Common myeloid progenitor, CD34-positive (primary cell): ENCODE measurements at regions of chr9 and their contacts with region 1.

Region 1: DNA sequence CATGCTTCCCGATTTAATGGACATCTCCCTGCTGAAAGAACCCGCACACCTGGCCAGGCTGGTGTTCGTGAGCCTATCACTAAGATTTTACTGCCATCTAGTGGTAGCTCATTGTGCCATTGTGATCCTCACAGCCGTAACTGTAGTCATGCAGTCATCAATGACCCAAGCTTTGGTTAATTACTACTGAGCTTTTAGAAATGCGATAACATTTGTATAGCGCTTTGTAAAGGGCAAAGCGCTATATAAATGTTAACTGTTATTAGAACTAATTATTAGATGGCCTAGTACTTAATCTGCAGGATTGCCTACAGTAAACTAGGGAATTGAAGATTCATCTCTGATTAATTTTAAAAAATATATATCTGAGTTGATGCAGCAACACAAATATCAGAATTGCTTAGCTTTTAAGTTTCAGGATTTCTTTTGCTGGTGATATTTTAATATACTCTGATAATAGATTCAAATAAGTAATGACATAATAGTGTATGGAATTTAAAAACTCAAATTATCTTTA is 90.2 kb downstream of the HACD4 start:
- DNase-seq: peak; percentile 72 to 84 (median 82)
- H3K4me3 ChIP-seq: peak overlapping the region in 2 of 7 experiments; percentile 11 to 62
- H3K27ac ChIP-seq: no peak overlapping the region
- H3K4me1 ChIP-seq: peaks cover 0 to 4% (median 0%) of the 10 kb centered on the region in 4 experiments
- H3K27me3 ChIP-seq: no peaks in the 10 kb centered on the region

Region 2: GRCh38 chr9:20622330-20623020 is 318.8 kb before region 1 on chr9 and contains the start of gene MLLT3:
- CTCF ChIA-PET with region 1: interaction called, 36 read pairs
- POLR2A ChIA-PET with region 1: interaction called, 4 read pairs
- DNase-seq: peak; percentile 96 to 97 (median 97)
- H3K4me3 ChIP-seq: peak within 1 kb of the TSS; percentile 84 to 99 (median 97)
- H3K27ac ChIP-seq: peak within 1 kb of the TSS in 1 of 2 experiments; percentile 73
- H3K4me1 ChIP-seq: peaks cover 11 to 41% (median 33%) of the 10 kb centered on the region in 4 experiments
- H3K27me3 ChIP-seq: no peaks in the 10 kb centered on the region

Region 3: GRCh38 chr9:20884985-20885593 is 56.1 kb before region 1 on chr9:
- CTCF ChIA-PET with region 1: interaction called, 19 read pairs
- POLR2A ChIA-PET with region 1: no interaction called
- DNase-seq: peak; percentile 69 to 88 (median 86)
- H3K4me3 ChIP-seq: no peak overlapping the region
- H3K27ac ChIP-seq: no peak overlapping the region
- H3K4me1 ChIP-seq: peaks cover 0 to 6% (median 2%) of the 10 kb centered on the region in 4 experiments
- H3K27me3 ChIP-seq: no peaks in the 10 kb centered on the region

Region 4: DNA sequence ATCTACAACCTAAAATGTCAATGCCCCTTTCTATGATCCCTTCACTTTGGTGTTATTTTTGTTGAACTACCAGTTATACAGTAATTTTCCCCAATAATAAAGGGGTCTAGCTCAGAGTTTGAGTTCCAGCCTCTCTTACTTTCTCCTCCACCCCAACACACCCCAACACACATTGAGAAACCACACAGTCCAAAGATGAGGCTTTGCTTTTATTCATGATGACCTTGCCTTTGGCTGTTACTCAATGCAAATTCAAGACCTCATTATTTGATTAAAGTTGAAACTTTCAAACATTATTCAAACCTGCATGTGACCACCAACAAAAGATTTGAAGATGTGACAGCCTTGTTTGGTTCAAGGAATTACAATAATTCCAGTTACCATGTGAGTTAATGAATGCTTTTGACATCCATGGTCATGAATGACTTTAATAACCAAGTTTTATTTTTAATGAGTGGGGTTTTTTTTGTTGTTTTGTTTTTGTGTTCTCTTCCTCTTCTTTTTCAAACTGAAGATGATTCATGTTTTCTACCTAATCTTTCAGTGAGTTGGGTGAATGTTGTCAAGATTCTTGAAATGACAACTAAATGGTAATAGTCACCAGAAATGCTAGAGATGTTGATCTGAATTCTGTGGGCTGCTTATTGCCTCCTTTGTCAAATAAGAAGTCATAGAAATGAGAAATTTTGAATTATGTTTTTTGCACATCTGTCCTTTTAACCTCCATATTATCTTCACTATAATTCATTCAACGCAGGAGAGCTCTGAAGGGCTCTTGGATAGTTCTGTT is 15.8 kb before region 1 on chr9:
- CTCF ChIA-PET with region 1: interaction called, 10 read pairs
- POLR2A ChIA-PET with region 1: no interaction called
- DNase-seq: no peak
- H3K4me3 ChIP-seq: no peak overlapping the region
- H3K27ac ChIP-seq: no peak overlapping the region
- H3K4me1 ChIP-seq: peaks cover 0 to 3% (median 0%) of the 10 kb centered on the region in 4 experiments
- H3K27me3 ChIP-seq: no peaks in the 10 kb centered on the region

Region 5: GRCh38 chr9:21141427-21141882 is 200.2 kb after region 1 on chr9 and contains the start of gene IFNW1:
- CTCF ChIA-PET with region 1: no interaction called
- POLR2A ChIA-PET with region 1: no interaction called
- DNase-seq: no peak
- H3K4me3 ChIP-seq: no peak within 1 kb of the TSS
- H3K27ac ChIP-seq: no peak within 1 kb of the TSS
- H3K4me1 ChIP-seq: peaks cover 4 to 10% (median 7%) of the 10 kb centered on the region in 4 experiments
- H3K27me3 ChIP-seq: no peaks in the 10 kb centered on the region

Region 6: DNA sequence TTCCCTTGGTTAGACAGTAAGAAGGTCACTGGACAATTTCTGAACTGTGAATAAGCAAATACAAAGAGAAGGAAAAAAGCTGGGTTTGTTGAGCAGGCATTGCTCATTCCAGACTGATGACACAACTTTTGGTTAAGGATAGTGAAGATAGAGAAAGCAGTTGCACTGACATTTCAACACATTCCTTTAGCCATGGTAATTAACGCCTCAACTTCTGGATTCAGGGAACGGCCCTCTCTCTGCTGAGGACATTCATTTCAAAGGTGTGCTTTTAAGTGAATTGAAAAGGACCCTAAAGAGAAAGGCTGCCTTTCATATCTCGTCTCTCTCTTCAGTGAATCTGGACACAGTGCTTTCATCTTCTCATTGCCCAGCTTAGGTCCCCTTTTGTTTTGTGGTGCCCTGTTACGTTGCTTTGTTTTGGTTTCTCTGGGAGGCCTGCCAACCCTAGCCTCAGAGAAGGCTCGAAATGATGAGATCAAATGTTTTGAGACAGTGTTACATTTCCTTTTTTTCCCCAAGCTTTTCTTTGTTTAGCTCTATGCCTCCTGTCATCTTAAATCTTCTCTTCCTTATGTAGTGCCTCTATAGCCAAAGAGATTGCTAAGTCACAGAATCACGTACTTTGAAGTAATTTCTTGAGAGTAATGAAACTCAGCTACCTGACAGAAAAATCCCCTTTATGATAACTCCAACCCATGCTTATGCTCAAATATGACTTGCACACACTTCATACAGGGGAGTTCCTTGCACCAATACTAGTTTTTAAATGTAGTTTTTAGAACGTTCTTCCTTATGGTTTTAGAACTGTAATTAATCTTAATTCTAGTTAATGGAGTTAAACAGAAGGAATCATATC is 635.3 kb after region 1 on chr9:
- CTCF ChIA-PET with region 1: no interaction called
- POLR2A ChIA-PET with region 1: no interaction called
- DNase-seq: peak in 2 of 3 donors; percentile 21 to 25
- H3K4me3 ChIP-seq: no peak overlapping the region
- H3K27ac ChIP-seq: no peak overlapping the region
- H3K4me1 ChIP-seq: peaks cover 0 to 12% (median 5%) of the 10 kb centered on the region in 4 experiments
- H3K27me3 ChIP-seq: peaks cover 0 to 2% (median 0%) of the 10 kb centered on the region in 5 experiments